Right lobe of liver (tissue), 6 donors: ENCODE measurements at regions of chr20 and their contacts with region 1.

Region 1: DNA sequence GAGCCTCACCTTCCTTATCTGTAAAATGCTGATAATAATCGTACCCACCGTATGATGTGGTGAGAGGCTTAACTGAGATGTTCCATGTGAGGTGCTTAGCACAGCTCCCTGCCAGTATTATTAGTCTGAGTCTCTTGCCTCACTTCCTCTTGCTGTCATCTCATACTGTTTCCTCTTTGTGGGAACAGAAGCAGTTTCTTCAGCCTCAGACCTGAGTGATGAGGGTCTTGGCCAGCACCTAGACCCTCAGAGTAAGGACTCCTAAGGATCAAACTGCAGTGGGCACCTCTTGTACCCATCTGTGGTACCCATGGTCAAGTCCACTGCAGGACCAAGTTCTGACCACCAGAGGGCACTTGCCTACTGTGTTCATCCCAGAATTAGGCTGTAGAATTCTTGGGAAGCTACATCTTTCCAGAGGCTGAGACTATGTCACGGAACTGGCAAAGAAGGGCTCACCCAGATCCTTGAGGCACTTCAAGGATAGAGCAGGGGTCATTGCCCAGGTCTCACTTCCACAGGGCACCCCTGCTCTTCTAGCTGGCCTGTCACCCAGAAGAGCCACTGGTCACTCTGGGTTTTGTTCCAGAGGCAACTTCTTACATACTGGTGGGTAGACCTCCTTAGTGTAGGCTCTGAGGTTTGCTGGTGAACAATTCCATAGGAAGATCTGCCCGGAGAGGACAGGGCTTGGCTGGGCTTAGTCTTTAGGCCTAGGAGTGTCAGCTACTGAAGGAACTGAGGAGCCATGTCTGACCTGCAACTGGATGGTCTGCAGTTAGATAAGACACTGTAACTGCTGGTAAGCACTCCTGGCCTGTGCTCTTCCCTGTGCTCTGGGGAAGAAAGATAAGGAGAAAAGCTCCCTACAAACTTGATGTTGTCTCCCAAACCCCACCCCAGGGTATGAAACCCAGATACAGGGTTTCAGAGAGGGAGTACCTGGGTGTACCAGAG is 20.6 kb upstream of the SGK2 start:
- DNase-seq: peak in 2 of 3 donors; percentile 70
- ATAC-seq: peak; percentile 76 to 82 (median 78)
- H3K4me3 ChIP-seq: no peak overlapping the region
- H3K27ac ChIP-seq: no peak overlapping the region
- H3K4me1 ChIP-seq: peaks cover 0 to 16% (median 7%) of the 10 kb centered on the region in 4 donors
- H3K27me3 ChIP-seq: no peaks in the 10 kb centered on the region
- CTCF ChIP-seq: peak; percentile 91 to 94 (median 92)
- POLR2A ChIP-seq: no peak

Region 2: GRCh38 chr20:43666376-43667328 is 128.5 kb after region 1 on chr20 and contains the start of gene MYBL2:
- intact Hi-C with region 1: loop called in 1 of 2 experiments (anchors 10 kb)
- DNase-seq: peak; percentile 62 to 73 (median 72)
- ATAC-seq: peak; percentile 81 to 96 (median 92)
- H3K4me3 ChIP-seq: peak within 1 kb of the TSS; percentile 39 to 54 (median 51)
- H3K27ac ChIP-seq: no peak within 1 kb of the TSS
- H3K4me1 ChIP-seq: no peaks in the 10 kb centered on the region
- H3K27me3 ChIP-seq: no peaks in the 10 kb centered on the region
- CTCF ChIP-seq: no peak
- POLR2A ChIP-seq: no peak
- total RNA-seq, gene MYBL2: 0.44 to 3.5 (median 1.8) TPM in 5 of 6 experiments, not detected in the other

Region 3: DNA sequence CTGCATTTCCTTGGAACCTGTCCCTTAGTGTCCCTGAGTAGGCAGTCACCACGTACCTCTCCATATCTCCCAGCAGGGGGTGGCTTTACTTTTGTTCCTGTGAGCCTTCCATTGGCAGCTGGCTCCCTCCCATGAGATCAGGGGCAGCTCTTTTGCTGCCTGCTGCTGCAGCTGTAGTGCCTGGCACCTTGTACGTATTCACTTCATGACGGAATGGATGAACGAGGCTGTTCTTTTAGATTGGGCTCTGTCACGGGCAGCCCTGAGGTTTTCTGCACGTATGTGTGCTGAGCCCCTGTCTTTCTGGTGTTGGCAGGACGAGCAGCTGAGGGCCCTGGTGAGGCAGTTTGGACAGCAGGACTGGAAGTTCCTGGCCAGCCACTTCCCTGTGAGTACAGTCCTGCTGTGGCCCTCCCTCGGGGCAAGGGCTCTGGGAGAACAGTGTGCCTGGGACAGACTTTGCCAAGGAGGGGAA is 143.3 kb after region 1 on chr20:
- intact Hi-C with region 1: loop called in 1 of 2 experiments (anchors 10 kb)
- DNase-seq: no peak
- ATAC-seq: no peak
- H3K4me3 ChIP-seq: no peak overlapping the region
- H3K27ac ChIP-seq: no peak overlapping the region
- H3K4me1 ChIP-seq: no peaks in the 10 kb centered on the region
- H3K27me3 ChIP-seq: no peaks in the 10 kb centered on the region
- CTCF ChIP-seq: no peak
- POLR2A ChIP-seq: no peak

Region 4: GRCh38 chr20:43691928-43692524 is 153.8 kb after region 1 on chr20:
- intact Hi-C with region 1: loop called (anchors 10 kb)
- DNase-seq: peak in 2 of 3 donors; percentile 66 to 67
- ATAC-seq: peak; percentile 78 to 91 (median 89)
- H3K4me3 ChIP-seq: no peak overlapping the region
- H3K27ac ChIP-seq: no peak overlapping the region
- H3K4me1 ChIP-seq: no peaks in the 10 kb centered on the region
- H3K27me3 ChIP-seq: no peaks in the 10 kb centered on the region
- CTCF ChIP-seq: peak; percentile 55 to 73 (median 65)
- POLR2A ChIP-seq: no peak